ENCODE measurements at regions of chr21 and their contacts with region 1.

Region 1: DNA sequence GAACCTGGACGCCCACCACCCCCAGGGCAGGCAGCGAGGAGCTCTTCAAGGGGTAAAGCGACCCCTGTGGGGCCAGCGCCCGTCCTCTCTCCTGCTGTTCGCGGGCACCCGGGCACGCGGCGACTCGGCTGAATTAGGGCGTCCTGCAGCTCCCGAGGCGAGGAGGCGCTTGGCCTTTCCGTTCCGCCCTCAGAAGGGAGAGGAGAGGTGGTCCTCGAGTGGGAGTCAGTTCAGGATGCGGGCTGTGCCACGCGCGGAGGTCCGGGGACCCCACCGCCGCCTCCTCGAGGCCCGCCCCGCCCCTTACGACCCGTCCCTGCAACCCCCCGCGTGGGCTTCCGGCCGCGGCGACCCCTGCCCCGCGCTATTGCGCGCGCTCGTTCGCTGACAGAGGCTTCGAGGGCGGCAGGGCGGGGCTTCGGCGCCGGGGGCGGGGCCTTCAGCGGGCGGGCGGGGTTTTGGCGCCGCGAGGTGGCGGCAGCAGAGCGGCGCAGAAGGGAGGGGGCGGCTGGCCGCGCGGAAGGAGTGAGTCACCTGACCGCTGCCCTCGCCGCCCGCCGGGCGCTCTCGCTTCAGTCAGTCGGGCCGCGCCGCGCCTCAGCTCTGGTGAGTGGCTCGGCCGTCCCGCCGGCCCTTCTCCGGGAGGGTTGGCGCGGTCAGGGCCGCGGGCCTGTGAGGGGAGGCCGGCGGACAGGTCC is at the start of gene BACH1:
- DNase-seq: peak; percentile 87
- H3K4me3 Mint-ChIP-seq: peak within 1 kb of the TSS; percentile 82
- H3K27ac Mint-ChIP-seq: peak within 1 kb of the TSS; percentile 77
- H3K4me1 Mint-ChIP-seq: peaks cover 44% of the 10 kb centered on the region
- H3K27me3 Mint-ChIP-seq: peaks cover 12% of the 10 kb centered on the region
- total RNA-seq, gene BACH1: 21.6 to 26.2 TPM

Region 2: GRCh38 chr21:28992526-28993292 is 305.8 kb before region 1 on chr21 and contains the start of gene LTN1:
- CTCF ChIA-PET with region 1: no interaction called
- POLR2A ChIA-PET with region 1: interaction called, 12 read pairs
- DNase-seq: peak; percentile 99
- H3K4me3 Mint-ChIP-seq: peak within 1 kb of the TSS; percentile 86
- H3K27ac Mint-ChIP-seq: peak within 1 kb of the TSS; percentile 94
- H3K4me1 Mint-ChIP-seq: peaks cover 44% of the 10 kb centered on the region
- H3K27me3 Mint-ChIP-seq: no peaks in the 10 kb centered on the region
- total RNA-seq, gene LTN1: 25.8 to 26.5 TPM

Region 3: DNA sequence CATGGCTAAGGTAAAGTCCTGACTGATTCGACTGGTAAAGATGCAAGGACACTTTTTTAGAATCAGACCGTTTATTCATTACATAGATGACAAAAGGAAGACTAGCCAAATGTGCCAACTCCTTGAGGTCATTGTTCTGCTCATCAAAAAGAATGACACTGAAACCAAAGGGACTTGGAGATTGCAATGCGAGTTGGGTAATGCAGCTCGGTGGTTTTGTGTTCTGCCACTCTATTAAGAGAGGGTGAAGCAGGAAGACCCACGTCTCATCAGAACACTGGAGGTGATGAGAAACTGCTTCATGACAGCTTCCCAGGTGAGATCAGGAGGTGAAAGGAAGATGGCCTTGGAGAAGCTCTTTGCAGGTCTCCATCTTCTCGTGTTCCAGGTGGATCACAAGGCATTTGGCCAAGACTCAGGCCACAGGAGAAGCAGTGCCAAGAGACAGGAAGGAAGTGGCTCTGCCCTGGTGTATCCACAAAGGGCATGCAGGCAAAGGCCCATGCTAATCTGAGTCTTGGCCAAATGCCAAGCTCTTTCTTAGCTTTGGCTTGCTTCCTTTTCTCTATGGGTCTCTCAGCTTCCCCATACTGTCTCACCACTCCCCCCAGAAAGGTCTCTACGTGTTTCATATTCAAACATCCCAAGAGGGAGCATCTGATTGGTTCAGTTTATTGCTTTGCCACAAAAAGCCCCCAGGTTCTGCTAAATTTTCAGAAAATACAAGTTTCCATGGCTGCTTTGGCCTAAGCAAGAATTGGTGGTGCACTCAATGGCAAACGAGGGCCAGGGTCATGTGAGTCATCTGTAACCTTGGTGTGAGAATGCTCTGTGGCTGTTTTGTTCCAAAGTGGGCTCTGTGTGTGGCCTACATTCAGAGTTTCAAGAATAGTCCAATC is 219.4 kb before region 1 on chr21:
- CTCF ChIA-PET with region 1: interaction called, 6 read pairs
- POLR2A ChIA-PET with region 1: interaction called, 69 read pairs
- DNase-seq: peak; percentile 42
- H3K4me3 Mint-ChIP-seq: peak overlapping the region; percentile 21
- H3K27ac Mint-ChIP-seq: peak overlapping the region; percentile 82
- H3K4me1 Mint-ChIP-seq: peaks cover 56% of the 10 kb centered on the region
- H3K27me3 Mint-ChIP-seq: no peaks in the 10 kb centered on the region

Region 4: GRCh38 chr21:29195981-29196669 is 102.4 kb before region 1 on chr21:
- CTCF ChIA-PET with region 1: interaction called, 6 read pairs
- POLR2A ChIA-PET with region 1: interaction called, 13 read pairs
- DNase-seq: peak; percentile 70
- H3K4me3 Mint-ChIP-seq: peak overlapping the region; percentile 73
- H3K27ac Mint-ChIP-seq: peak overlapping the region; percentile 76
- H3K4me1 Mint-ChIP-seq: peaks cover 30% of the 10 kb centered on the region
- H3K27me3 Mint-ChIP-seq: no peaks in the 10 kb centered on the region

Region 5: GRCh38 chr21:29372063-29372802 is 73.7 kb after region 1 on chr21:
- CTCF ChIA-PET with region 1: interaction called, 13 read pairs
- POLR2A ChIA-PET with region 1: interaction called, 4 read pairs
- DNase-seq: peak; percentile 45
- H3K4me3 Mint-ChIP-seq: no peak overlapping the region
- H3K27ac Mint-ChIP-seq: no peak overlapping the region
- H3K4me1 Mint-ChIP-seq: peaks cover 10% of the 10 kb centered on the region
- H3K27me3 Mint-ChIP-seq: no peaks in the 10 kb centered on the region